ENCODE measurements at regions of chr6 and their contacts with region 1.

Region 1: GRCh38 chr6:32589598-32590449 is at the start of gene HLA-DRB1:
- DNase-seq: peak in 1 of 2 donors; percentile 20
- ATAC-seq: peak; percentile 97
- H3K4me3 ChIP-seq: peak within 1 kb of the TSS in 1 of 4 donors; percentile 41
- H3K27ac ChIP-seq: peak within 1 kb of the TSS in 1 of 4 donors; percentile 53
- H3K4me1 ChIP-seq: no peaks in the 10 kb centered on the region
- H3K27me3 ChIP-seq: no peaks in the 10 kb centered on the region
- CTCF ChIP-seq: no peak
- POLR2A ChIP-seq: peak in 1 of 2 donors; percentile 60
- total RNA-seq, gene HLA-DRB1: 7.5 to 25.2 (median 16.5) TPM

Region 2: DNA sequence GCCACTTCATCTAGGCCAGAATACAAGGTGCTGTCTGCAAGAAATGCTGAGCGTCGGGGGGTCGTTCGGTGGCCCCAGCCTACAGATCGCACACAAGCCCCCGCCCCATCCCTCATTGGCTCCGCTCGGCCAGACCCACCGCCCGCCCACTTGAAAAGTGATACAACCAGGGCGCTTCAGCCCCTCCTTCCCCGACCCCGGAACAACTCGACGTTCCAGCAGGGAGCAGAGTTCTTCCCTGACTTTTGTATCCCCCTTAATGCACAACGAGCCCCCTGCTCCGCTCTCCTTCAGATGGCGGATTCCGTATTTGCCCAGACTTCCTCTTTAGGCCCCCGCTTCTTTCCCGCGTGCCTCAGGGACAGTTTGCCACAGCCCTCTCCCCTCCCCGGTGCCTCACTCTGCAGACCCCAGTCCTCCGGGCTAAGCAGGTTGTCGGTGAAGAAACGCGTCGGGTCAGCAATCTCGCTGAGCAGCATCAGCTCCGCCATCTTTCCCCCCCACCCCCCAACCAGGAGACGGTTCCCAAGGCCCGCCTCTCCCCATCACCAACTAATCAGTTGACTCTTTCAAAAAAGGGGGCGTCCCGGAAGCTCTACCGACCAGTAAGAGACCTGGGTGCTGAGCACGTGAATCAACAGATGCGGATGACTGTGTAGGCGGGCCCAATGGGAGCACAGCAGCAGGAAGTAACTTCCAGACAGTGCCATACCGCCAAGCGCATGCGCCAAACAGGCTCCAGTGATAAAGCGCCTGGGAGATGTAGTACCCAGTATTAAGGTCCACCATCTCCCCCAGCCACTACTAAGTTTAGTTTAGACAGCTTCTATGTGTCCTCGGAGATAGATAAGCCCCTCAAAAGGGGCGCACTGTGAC is 461.9 kb before region 1 on chr6 and contains the start of gene ATF6B:
- in situ Hi-C with region 1: no loop called
- intact Hi-C with region 1: no loop called
- DNase-seq: peak; percentile 100
- ATAC-seq: peak; percentile 95 to 96
- H3K4me3 ChIP-seq: peak within 1 kb of the TSS; percentile 91 to 99 (median 96)
- H3K27ac ChIP-seq: peak within 1 kb of the TSS; percentile 89 to 93 (median 92)
- H3K4me1 ChIP-seq: peaks cover 24 to 26% of the 10 kb centered on the region in 2 donors
- H3K27me3 ChIP-seq: no peaks in the 10 kb centered on the region
- CTCF ChIP-seq: no peak
- POLR2A ChIP-seq: peak; percentile 57 to 67
- total RNA-seq, gene ATF6B: 6.8 to 18.4 (median 9.5) TPM

Region 3: GRCh38 chr6:32483968-32484636 is 105.7 kb before region 1 on chr6:
- in situ Hi-C with region 1: loop called in 1 of 4 experiments (anchors 25 kb)
- intact Hi-C with region 1: no loop called
- DNase-seq: no peak
- ATAC-seq: no peak
- H3K4me3 ChIP-seq: no peak overlapping the region
- H3K27ac ChIP-seq: no peak overlapping the region
- H3K4me1 ChIP-seq: no peaks in the 10 kb centered on the region
- H3K27me3 ChIP-seq: no peaks in the 10 kb centered on the region
- CTCF ChIP-seq: no peak
- POLR2A ChIP-seq: no peak

Region 4: GRCh38 chr6:32522302-32523047 is 67.3 kb before region 1 on chr6:
- in situ Hi-C with region 1: loop called (anchors 5 to 10 kb)
- intact Hi-C with region 1: loop called (anchors 5 kb)
- DNase-seq: no peak
- ATAC-seq: no peak
- H3K4me3 ChIP-seq: peak overlapping the region in 1 of 4 donors; percentile 26
- H3K27ac ChIP-seq: peak overlapping the region in 1 of 4 donors; percentile 18
- H3K4me1 ChIP-seq: no peaks in the 10 kb centered on the region
- H3K27me3 ChIP-seq: no peaks in the 10 kb centered on the region
- CTCF ChIP-seq: no peak
- POLR2A ChIP-seq: no peak

Region 5: DNA sequence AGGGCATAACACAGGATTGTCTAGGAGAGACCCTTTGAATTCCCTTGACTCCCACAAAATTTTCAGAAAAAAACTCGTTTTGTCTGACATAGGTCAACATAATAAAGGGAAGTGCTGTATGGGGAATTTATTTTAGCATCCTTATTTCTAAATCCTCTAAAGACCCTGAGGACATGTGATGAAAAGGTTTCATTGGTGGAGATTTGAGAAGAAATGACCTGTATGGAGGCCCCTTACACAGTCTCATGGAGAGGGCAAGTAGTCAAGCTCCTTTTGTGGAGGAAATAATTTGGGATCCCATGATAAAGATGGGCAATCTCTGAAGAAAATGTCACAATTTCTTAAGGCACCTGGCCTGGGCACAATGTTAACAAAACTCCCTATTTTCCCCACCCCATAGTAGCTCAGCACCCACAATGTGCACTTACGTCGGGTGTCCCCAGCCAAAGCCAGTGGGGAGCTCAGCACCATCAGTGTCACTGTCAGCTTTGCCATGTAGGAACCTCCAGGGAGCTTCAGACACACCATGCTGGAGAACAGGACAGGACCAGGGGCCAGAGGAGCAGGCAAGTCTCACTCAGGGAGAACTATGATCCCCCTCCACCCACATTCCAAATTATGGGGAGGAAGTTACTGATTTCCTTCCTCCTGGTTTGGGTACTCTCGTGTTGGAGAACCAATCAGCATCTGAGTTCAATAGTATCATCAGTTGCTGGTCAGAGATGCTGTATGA is 60.0 kb before region 1 on chr6 and contains the start of gene HLA-DRB5:
- in situ Hi-C with region 1: loop called (anchors 5 to 10 kb)
- intact Hi-C with region 1: no loop called
- DNase-seq: peak; percentile 1 to 10
- ATAC-seq: peak; percentile 56 to 72
- H3K4me3 ChIP-seq: peak within 1 kb of the TSS in 1 of 4 donors; percentile 41
- H3K27ac ChIP-seq: peak within 1 kb of the TSS in 1 of 4 donors; percentile 65
- H3K4me1 ChIP-seq: no peaks in the 10 kb centered on the region
- H3K27me3 ChIP-seq: no peaks in the 10 kb centered on the region
- CTCF ChIP-seq: no peak
- POLR2A ChIP-seq: peak in 1 of 2 donors; percentile 44
- total RNA-seq, gene HLA-DRB5: 0.80 to 19.0 TPM in 2 of 4 donors, not detected in the others

Region 6: DNA sequence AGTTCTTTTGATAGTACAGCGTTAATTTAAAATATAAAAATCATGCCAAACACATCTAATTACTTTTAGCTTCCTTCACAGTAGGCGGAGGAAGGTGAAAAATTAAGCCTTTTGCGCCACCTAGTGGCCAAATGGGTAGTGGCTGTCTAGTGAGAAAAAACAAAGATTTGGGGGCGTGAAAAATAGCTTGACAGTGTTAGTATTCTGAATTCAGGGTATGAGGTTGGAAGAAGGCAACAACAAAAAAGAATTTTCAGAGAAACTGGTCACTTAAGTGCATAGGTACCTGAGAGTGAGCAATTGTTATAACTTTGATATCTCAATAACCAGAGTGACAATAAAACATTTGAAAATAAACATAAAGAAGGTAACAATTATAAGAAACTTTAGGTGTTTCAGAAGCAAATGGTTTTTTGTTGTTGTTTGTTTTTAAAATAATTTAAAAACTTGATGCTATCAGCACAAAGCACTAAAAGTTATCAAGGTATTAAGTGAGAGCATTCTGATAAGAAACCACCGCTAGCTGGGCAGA is 278.5 kb after region 1 on chr6:
- in situ Hi-C with region 1: no loop called
- intact Hi-C with region 1: no loop called
- DNase-seq: peak; percentile 46 to 55
- ATAC-seq: peak; percentile 60 to 86
- H3K4me3 ChIP-seq: no peak overlapping the region
- H3K27ac ChIP-seq: no peak overlapping the region
- H3K4me1 ChIP-seq: no peaks in the 10 kb centered on the region
- H3K27me3 ChIP-seq: no peaks in the 10 kb centered on the region
- CTCF ChIP-seq: peak; percentile 88 to 95 (median 91)
- POLR2A ChIP-seq: no peak

Measured in gastrocnemius medialis (tissue), 4 donors.